Heart right ventricle (tissue), 16 donors: ENCODE measurements at regions of chr10 and their contacts with region 1.

Region 1: DNA sequence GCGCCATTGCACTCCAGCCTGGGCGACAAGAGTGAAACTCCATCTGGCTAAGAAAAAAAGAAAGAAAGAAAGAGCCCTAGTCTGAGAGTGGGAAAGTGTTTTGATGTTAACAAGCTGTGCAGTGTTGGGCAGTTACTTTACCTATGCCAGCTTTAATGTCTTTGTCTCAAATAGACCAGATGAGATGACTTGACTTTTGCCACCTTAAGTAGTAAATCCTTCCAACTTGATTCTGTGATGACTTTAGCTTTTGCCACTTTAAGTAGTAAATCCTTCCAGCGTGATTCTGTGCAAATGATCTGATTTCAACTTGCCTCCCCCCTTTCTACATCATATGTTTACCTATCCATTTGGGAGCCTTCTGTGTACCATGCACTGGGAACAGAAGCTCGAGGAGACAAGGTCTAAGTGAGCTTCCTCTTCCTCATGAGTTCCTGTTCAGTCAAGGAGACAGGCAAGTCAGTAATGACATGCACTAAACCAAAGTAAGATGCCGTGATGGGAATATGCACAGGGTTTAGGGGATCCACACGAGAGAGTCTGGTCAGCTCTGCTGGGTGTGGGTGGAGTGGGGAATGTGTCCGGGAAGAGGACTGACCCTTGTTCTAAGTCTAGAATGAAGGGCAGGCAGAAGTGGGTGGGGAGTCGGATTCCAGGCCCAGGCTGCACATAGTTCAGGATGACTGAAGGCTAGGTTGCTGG is 17.2 kb downstream of the INPP5F start:
- DNase-seq: no peak
- ATAC-seq: peak in 3 of 8 donors; percentile 54 to 69 (median 67)
- H3K4me3 ChIP-seq: no peak overlapping the region
- H3K27ac ChIP-seq: no peak overlapping the region
- H3K4me1 ChIP-seq: peaks cover 0 to 14% (median 5%) of the 10 kb centered on the region in 9 donors
- H3K27me3 ChIP-seq: no peaks in the 10 kb centered on the region
- CTCF ChIP-seq: no peak

Region 2: DNA sequence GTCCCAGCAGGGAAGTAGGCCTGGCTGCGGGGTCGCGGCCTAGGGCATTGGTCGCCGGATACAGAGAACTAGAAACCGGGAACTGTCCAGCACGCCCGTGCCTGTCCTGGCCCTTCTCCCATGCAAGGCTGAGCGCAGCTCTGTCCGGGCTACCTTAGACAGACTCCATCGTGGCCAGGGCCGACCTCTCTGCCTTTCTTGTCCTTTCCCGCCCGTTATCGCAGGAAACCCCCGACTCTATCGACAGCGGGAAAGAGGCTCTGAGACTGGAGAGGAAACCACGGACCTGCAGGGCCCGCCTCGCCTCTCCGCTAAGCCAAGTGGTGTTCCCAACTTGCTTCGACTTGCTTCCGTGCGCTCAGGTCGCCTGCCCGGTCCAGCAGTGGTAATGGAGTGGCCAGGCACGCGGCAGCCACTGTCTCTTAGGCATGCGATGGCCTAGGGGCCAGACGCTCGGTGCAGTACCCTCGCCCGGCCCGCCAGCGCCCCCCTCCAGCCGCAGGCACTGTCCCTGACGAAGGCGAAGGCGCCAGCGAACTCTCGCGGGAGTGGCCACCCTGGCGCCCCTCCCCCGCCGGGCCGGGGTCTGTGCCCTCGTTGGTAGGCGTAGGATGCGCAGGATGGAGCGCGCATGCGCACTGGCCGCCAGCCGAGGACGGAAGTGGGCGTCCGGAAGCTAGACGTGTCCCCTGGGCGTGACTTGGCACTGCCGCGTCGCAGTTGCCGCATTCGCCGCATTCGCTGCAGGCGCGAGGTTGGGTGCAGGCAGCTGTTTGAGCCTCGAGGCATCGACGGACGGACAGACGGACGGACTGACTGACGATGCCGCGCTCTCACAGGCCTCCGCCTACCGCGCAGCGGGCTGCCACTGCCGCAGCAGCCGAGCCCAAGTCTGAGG is 75.1 kb after region 1 on chr10:
- intact Hi-C with region 1: loop called in 1 of 10 experiments (anchors 10 kb)
- DNase-seq: peak; percentile 35 to 68
- ATAC-seq: peak; percentile 48 to 82 (median 74)
- H3K4me3 ChIP-seq: peak overlapping the region in 7 of 10 donors; percentile 8 to 37 (median 33)
- H3K27ac ChIP-seq: no peak overlapping the region
- H3K4me1 ChIP-seq: peaks cover 0 to 9% (median 0%) of the 10 kb centered on the region in 9 donors
- H3K27me3 ChIP-seq: no peaks in the 10 kb centered on the region
- CTCF ChIP-seq: no peak

Region 3: GRCh38 chr10:119867317-119867716 is 124.2 kb after region 1 on chr10:
- intact Hi-C with region 1: loop called in 1 of 10 experiments (anchors 5 kb)
- DNase-seq: no peak
- ATAC-seq: no peak
- H3K4me3 ChIP-seq: no peak overlapping the region
- H3K27ac ChIP-seq: no peak overlapping the region
- H3K4me1 ChIP-seq: peaks cover 0 to 54% (median 26%) of the 10 kb centered on the region in 9 donors
- H3K27me3 ChIP-seq: no peaks in the 10 kb centered on the region
- CTCF ChIP-seq: no peak